Activated CD8-positive, alpha-beta T cell treated with anti-CD3 and anti-CD28 coated beads, Interleukin-2, amount 10 ng/mL, durations not matched to agents 7 days and 5 days (primary cell): ENCODE measurements at regions of chr13 and their contacts with region 1.

Region 1: DNA sequence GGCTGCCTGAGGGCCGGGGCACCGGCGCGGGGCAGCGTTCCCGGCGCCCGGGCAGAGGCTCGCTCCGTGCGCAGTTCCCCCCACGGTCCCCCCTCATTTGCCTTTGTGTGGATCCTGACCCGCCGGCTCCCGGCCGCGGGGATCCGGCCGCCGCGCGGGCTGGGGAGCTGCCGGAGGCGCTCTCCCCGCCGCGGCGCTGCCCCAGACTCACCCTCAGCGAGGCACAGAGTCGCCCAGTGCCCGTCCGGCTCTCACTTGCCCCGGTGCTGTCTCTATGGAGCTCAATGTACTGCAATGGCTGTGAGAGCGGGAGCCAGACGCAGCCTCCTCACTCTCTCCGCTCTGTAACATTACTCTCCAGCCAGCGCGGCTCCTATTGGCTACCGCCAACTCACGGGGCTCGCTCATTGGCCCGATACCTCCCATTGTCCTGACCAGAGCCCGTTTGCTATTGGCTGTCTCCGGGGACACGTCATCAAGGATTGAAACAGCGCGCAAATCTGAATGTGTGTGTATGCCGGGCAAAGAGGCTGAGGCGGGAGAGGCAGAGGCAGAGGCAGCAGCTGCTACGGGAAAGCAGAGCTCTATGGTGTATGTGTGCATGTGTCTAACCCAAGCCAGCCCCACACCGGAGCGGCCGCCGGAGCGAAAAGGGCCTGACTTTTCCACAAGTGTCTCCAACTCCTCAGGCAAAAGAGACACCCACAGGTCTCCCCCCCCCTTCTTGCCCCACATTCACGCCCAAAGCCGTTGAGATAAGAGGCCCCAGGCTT is at the start of gene HMGB1:
- DNase-seq: peak; percentile 99
- ATAC-seq: peak; percentile 95
- H3K4me3 Mint-ChIP-seq: peak within 1 kb of the TSS; percentile 88
- H3K27ac Mint-ChIP-seq: peak within 1 kb of the TSS; percentile 98
- H3K4me1 Mint-ChIP-seq: peaks cover 28% of the 10 kb centered on the region
- H3K27me3 Mint-ChIP-seq: no peaks in the 10 kb centered on the region
- total RNA-seq, gene HMGB1: 650 to 662 TPM

Region 2: GRCh38 chr13:30355384-30355699 is 110.4 kb before region 1 on chr13:
- CTCF ChIA-PET with region 1: interaction called, 12 read pairs
- POLR2A ChIA-PET with region 1: interaction called, 5 read pairs
- DNase-seq: peak; percentile 51
- ATAC-seq: peak; percentile 80
- H3K4me3 Mint-ChIP-seq: no peak overlapping the region
- H3K27ac Mint-ChIP-seq: no peak overlapping the region
- H3K4me1 Mint-ChIP-seq: peaks cover 19% of the 10 kb centered on the region
- H3K27me3 Mint-ChIP-seq: peaks cover 10% of the 10 kb centered on the region